Activated naive CD8-positive, alpha-beta T cell treated with anti-CD3 and anti-CD28 coated beads, Interleukin-2, amount 10 ng/mL, durations not matched to agents 7 days and 5 days (primary cell): ENCODE measurements at regions of chr18 and their contacts with region 1.

Region 1: GRCh38 chr18:79523736-79524180 is 128.0 kb downstream of the NFATC1 start:
- DNase-seq: no peak
- ATAC-seq: peak; percentile 42
- H3K4me3 Mint-ChIP-seq: peak overlapping the region; percentile 79
- H3K27ac Mint-ChIP-seq: peak overlapping the region; percentile 98
- H3K4me1 Mint-ChIP-seq: peaks cover 39% of the 10 kb centered on the region
- H3K27me3 Mint-ChIP-seq: no peaks in the 10 kb centered on the region

Region 2: DNA sequence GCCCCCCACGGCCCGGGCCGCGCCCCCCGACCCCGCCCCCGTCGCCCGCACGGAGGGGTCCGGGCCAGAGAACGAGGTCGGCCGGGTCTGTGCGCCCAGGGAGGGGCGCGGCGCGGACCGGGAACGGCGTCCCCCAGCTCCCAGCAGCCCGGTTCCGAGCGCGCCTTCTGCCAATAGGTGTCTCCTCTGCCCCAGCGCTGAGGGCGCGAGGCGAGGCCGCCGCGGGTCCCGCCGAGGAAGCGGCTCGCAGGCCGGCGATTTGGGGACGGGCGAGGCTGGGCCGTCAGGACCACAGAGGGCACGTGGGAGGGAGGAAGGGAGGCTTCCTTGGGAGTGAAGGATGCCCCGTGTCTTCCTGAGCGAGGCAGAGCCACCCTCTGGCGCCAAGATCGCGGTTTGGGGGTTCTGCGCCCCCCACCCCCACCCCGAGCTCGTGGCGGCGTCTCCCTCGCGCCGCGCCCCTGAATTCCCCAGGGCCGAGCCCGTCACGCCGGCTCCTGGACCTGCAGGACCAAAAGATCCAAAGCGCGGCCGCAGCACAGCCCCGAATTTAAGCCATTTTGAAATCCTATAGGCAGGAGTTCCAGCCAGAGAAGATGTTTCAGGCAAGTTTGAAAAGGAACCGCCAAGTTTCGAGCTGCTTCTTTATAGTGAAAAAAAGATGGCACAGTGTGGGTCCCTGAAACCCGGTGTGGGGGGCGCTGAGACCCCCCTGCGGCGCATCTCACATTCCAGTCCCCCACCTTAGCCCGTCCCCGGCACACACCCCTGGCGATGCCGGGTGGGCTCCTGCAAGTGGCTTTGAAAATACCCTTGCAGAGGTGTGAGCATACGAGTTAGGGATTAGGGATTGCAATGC is 127.1 kb before region 1 on chr18:
- POLR2A ChIA-PET with region 1: interaction called, 21 read pairs
- DNase-seq: peak; percentile 76
- ATAC-seq: peak; percentile 19
- H3K4me3 Mint-ChIP-seq: peak overlapping the region; percentile 70
- H3K27ac Mint-ChIP-seq: no peak overlapping the region
- H3K4me1 Mint-ChIP-seq: peaks cover 17% of the 10 kb centered on the region
- H3K27me3 Mint-ChIP-seq: peaks cover 12% of the 10 kb centered on the region

Region 3: GRCh38 chr18:79405781-79406575 is 117.8 kb before region 1 on chr18:
- POLR2A ChIA-PET with region 1: interaction called, 10 read pairs
- DNase-seq: peak; percentile 84
- ATAC-seq: peak; percentile 95
- H3K4me3 Mint-ChIP-seq: peak overlapping the region; percentile 73
- H3K27ac Mint-ChIP-seq: peak overlapping the region; percentile 96
- H3K4me1 Mint-ChIP-seq: peaks cover 34% of the 10 kb centered on the region
- H3K27me3 Mint-ChIP-seq: no peaks in the 10 kb centered on the region

Region 4: GRCh38 chr18:79540161-79540903 is 16.6 kb after region 1 on chr18:
- POLR2A ChIA-PET with region 1: no interaction called
- DNase-seq: peak; percentile 14
- ATAC-seq: no peak
- H3K4me3 Mint-ChIP-seq: no peak overlapping the region
- H3K27ac Mint-ChIP-seq: no peak overlapping the region
- H3K4me1 Mint-ChIP-seq: no peaks in the 10 kb centered on the region
- H3K27me3 Mint-ChIP-seq: peaks cover 2% of the 10 kb centered on the region